ENCODE measurements at regions of chr3 and their contacts with region 1.

Region 1: DNA sequence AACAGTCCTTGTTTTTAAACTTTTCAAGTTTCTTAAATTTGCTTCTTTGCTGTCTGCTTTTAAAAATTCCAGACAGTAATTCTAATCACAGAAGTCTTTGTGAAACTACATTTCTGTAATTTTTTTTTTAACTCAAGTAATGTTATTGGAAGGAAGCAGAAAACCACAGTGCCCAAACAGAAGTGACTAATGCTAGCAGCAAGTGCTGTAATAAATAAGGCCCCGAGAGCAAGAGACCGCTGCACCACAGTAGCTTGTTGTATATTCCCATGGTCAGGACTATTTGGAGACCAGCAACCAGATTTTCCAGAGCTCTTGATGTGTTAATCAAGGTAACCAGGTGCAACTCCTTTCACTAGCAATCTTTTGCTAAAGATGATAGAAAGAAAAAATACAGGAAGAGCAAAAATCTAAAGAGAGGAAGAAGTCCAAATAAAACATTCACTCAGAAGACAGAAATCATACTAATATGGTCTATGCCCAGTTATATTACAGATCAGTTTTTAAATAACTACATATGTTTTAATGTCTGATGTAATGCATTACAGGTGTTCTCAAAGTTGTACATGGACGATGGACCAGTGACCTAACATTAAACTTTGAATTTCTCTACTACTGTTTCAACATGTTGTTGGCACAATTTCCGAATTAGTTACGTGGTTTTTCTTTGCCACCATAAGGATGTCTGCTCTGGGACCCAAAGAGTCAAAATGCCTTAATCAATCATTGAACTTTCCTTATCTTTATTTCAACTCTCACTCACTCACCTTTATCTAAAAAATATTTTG is 36.4 kb downstream of the WWTR1 start:
- DNase-seq: peak; percentile 60
- ATAC-seq: peak; percentile 74
- H3K4me3 Mint-ChIP-seq: peak overlapping the region; percentile 39
- H3K27ac Mint-ChIP-seq: peak overlapping the region; percentile 68
- H3K4me1 Mint-ChIP-seq: peaks cover 41% of the 10 kb centered on the region
- H3K27me3 Mint-ChIP-seq: peaks cover 3% of the 10 kb centered on the region

Region 2: GRCh38 chr3:149424918-149425317 is 196.5 kb before region 1 on chr3:
- CTCF ChIA-PET with region 1: no interaction called
- DNase-seq: no peak
- ATAC-seq: no peak
- H3K4me3 Mint-ChIP-seq: no peak overlapping the region
- H3K27ac Mint-ChIP-seq: no peak overlapping the region
- H3K4me1 Mint-ChIP-seq: no peaks in the 10 kb centered on the region
- H3K27me3 Mint-ChIP-seq: peaks cover 35% of the 10 kb centered on the region

Region 3: DNA sequence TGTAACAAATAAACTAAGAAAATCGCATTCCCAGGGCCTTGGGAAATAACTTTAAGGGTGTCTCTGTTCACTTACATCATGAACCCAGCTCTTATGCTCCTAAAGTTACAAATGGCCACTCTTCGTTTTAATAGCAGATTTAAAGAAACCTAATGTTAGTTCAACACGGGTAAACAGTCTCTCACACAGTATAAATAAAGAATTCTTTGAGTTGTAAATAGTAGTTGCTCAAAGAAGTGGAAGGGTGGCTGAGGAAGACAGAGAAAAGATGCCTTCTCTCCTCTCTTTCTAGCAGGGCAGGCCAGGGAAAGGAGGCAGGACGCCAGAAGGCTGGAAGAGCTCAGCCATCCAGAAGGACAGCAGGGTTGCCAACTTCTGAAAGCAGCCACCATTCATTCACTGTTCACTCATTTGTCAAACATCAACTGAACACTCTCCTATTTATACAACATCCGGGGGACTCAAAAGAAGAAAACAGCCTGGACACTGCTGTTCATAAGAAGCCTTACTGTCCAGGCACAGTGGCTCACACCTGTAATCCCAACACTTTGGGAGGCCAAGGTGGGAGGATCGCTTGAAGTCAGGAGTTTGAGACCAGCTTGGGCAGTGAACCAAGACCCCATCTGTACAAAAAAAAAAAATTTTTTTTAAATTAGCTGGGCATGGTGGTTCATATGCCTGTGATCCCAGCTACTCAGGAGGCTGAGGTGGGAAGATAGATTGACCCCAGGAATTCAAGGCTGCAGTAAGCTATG is 10.9 kb before region 1 on chr3:
- CTCF ChIA-PET with region 1: interaction called, 10 read pairs
- DNase-seq: no peak
- ATAC-seq: no peak
- H3K4me3 Mint-ChIP-seq: no peak overlapping the region
- H3K27ac Mint-ChIP-seq: no peak overlapping the region
- H3K4me1 Mint-ChIP-seq: peaks cover 13% of the 10 kb centered on the region
- H3K27me3 Mint-ChIP-seq: peaks cover 10% of the 10 kb centered on the region